ENCODE measurements at regions of chr9 and their contacts with region 1.

Region 1: DNA sequence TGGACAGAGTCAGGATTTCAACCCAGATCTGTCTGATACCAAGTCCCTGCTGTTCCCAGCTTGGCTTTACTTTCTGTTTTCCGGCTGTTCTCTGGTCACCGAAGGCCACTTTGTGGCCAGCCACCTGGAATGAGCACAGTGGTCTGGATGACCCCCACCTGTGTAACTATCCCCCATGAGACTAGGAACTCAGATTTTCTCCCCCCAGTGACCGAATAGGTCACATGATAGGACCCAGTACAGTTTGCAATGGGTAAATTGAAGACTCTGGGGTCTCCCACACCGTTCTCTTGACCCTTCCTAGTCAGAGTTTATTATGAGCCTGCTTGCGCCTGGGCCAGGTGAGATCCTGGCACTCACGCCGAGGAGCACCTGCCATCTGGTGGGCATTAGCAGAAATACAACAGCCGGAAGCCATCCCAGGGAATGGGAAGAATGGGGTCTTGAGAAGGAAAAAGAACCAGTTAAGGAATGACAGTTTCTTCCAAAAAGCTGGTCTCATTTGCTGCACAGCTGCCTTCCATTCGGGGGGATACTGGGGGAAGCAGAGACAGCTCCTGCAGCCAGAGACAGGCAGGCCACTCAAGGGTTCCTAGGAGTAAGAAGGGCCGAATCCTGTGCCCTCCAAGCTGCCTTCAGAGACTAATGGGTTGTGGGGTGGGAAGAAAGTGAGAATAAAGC is 7.1 kb downstream of the PHYHD1 start:
- DNase-seq: peak; percentile 22
- H3K4me3 Mint-ChIP-seq: no peak overlapping the region
- H3K27ac Mint-ChIP-seq: no peak overlapping the region
- H3K4me1 Mint-ChIP-seq: peaks cover 7% of the 10 kb centered on the region
- H3K27me3 Mint-ChIP-seq: peaks cover 2% of the 10 kb centered on the region

Region 2: DNA sequence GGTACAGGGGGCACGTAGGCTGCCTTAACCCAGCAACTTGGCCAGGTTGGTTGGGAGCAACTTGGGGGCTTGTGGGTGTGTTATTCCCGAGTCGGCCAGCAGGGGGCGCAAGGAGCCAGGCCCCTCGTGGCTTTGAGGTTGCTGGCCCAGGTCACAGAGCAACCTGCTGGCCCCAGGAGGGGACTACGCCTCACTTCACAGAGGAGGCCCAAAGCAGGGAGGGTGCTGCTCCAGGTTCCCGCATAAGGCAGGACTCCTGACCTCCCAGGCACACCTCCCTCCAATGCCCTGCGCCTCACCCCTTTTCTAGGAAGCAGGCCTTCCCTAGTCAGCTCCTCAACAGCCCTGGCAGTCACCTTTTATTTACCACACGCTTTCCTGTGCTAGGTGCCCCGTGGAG is 64.2 kb before region 1 on chr9:
- intact Hi-C with region 1: loop called (anchors 1 kb)
- DNase-seq: peak; percentile 77
- H3K4me3 Mint-ChIP-seq: no peak overlapping the region
- H3K27ac Mint-ChIP-seq: peak overlapping the region; percentile 38
- H3K4me1 Mint-ChIP-seq: peaks cover 4% of the 10 kb centered on the region
- H3K27me3 Mint-ChIP-seq: no peaks in the 10 kb centered on the region

Region 3: DNA sequence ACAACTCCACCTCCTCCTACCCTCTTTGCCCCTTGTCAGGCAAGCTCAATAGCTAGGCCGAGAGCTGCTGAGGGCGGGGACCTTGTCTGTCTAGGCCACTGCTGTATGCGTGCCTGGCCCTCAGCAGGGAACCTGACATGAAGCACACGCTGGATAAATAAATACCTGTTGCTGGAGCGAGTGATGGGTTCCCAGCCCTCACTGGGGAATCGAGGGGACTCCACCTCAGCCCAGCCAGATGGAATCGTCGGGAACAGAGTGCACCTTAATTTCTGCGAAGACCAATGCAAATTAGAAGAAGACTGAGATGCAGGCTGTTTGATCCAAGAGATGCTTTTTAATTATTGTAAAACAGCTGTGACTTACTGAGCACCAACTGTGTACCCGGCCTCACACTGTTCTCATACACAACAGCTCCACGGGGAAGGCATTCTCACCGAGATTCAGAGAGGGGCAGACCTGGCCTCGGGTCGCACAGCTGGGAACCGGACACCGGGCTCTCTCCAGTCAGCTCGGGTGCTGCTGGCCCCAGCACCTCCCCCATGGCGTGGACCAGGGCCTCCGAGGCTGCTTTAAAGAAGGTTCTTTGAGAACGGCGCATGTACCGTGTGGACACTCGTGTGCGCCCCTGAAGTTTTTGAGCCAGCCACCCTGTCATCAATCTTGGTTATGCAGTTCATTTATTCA is 359.9 kb after region 1 on chr9:
- intact Hi-C with region 1: no loop called
- DNase-seq: no peak
- H3K4me3 Mint-ChIP-seq: no peak overlapping the region
- H3K27ac Mint-ChIP-seq: no peak overlapping the region
- H3K4me1 Mint-ChIP-seq: no peaks in the 10 kb centered on the region
- H3K27me3 Mint-ChIP-seq: no peaks in the 10 kb centered on the region